CD8-positive, alpha-beta T cell (primary cell): ENCODE measurements at regions of chr2 and their contacts with region 1.

Region 1: DNA sequence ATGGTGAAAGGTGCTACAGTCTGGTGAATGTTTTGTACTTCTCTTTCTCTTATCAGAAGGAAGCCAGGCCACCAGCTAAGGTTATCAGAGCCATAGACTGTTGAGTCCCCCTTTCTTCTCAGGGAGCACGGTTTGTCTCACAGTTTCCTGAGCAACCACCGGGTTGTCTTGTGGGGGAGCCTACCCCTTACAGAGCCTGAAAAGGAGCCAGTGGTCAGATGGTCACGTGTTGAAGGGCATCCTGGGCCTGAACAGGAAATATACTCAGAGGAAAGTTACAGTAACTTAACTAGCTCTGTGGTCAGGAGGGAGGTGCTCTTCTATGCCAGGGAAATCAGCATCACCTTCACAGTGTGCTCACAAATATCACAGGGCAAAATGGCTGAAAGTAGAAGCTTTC is 11.6 kb downstream of the CD28 start:
- DNase-seq: peak in 7 of 9 experiments; percentile 42 to 83 (median 68)
- ATAC-seq: peak; percentile 42
- H3K4me3 ChIP-seq: peak overlapping the region in 1 of 2 experiments; percentile 10
- H3K4me3 Mint-ChIP-seq: peak overlapping the region; percentile 59
- H3K27ac ChIP-seq: peak overlapping the region; percentile 39 to 57
- H3K27ac Mint-ChIP-seq: peak overlapping the region; percentile 95
- H3K4me1 ChIP-seq: peaks cover 98% of the 10 kb centered on the region
- H3K4me1 Mint-ChIP-seq: peaks cover 98% of the 10 kb centered on the region
- H3K27me3 ChIP-seq: no peaks in the 10 kb centered on the region
- H3K27me3 Mint-ChIP-seq: no peaks in the 10 kb centered on the region
- CTCF ChIP-seq: no peak

Region 2: DNA sequence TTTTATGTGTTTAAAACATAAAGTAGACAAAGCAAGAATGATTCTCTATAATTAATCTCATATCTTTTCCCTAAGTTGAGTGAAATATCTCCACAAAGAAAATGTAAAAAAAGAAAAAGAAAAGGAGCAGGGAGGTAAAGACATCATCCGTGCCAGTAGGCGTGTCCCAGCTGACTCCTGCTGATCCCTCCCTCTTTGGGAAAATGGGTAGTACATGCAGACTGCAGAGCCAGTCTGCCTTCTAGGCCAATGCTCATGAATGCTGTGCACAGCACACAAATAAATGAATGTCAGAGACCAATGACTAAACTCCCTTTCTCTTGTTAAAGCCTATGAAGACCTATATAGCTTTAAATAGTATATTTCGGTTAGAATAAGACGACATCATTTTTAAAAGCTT is 247.7 kb before region 1 on chr2:
- CTCF ChIA-PET with region 1: no interaction called
- POLR2A ChIA-PET with region 1: no interaction called
- intact Hi-C with region 1: no loop called
- DNase-seq: no peak
- ATAC-seq: no peak
- H3K4me3 ChIP-seq: no peak overlapping the region
- H3K4me3 Mint-ChIP-seq: no peak overlapping the region
- H3K27ac ChIP-seq: no peak overlapping the region
- H3K27ac Mint-ChIP-seq: no peak overlapping the region
- H3K4me1 ChIP-seq: no peaks in the 10 kb centered on the region
- H3K4me1 Mint-ChIP-seq: no peaks in the 10 kb centered on the region
- H3K27me3 ChIP-seq: no peaks in the 10 kb centered on the region
- H3K27me3 Mint-ChIP-seq: no peaks in the 10 kb centered on the region
- CTCF ChIP-seq: no peak

Region 3: DNA sequence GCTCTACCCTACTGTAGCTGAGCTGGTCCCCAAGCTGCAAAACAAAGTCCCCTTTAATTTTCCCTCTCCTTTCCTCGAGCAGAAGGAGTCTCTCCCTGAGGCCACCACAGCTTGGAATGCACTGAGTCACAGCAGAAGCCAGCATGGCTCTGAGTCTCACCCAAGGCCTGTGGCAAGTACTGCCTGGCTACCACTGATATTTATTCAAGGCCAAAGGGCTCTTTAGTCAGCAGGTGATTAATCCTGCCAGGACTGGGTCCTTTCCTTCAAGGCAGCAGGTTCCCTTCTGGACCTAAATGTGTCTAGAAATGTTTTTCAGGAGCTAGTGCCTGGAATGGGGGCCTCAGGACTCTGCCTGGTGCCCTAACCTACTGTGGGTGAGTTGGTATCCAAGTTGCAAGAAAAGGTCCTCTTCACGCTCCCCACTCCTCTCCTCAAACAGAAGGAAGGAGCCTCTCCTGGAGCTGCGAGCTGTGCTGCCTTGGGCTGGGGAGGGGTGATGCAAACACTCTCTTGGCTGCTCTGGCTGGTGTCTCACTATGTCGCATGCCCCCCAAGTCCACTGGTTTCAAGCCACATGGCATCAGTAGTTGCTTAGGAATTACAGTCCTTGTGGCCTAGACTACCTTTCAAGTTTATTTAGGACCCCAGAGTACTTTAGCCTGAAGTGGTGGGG is 41.7 kb after region 1 on chr2:
- CTCF ChIA-PET with region 1: interaction called, 3 read pairs
- POLR2A ChIA-PET with region 1: interaction called, 9 read pairs
- intact Hi-C with region 1: loop called in 1 of 2 experiments (anchors 5 kb)
- DNase-seq: no peak
- ATAC-seq: no peak
- H3K4me3 ChIP-seq: no peak overlapping the region
- H3K4me3 Mint-ChIP-seq: no peak overlapping the region
- H3K27ac ChIP-seq: no peak overlapping the region
- H3K27ac Mint-ChIP-seq: no peak overlapping the region
- H3K4me1 ChIP-seq: peaks cover 22% of the 10 kb centered on the region
- H3K4me1 Mint-ChIP-seq: peaks cover 51% of the 10 kb centered on the region
- H3K27me3 ChIP-seq: no peaks in the 10 kb centered on the region
- H3K27me3 Mint-ChIP-seq: no peaks in the 10 kb centered on the region
- CTCF ChIP-seq: no peak

Region 4: DNA sequence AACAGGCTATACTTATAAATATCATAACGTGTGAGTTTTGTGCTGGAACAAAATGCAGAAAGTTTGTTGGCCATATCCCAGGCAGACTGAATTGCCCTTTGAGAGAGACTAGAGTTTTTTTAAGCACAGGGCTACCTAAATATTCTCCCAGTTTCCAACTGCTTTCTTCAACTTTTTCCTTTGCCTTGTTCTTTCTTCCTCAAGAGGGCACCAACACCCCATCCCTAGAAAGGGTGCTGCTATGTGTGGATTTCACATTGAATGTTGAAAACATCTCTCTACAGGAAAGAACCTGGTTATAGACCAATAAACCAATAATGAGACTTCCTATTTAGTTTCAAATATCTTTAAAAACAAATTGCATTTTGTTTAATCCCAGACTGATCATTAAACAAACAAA is 306.4 kb after region 1 on chr2:
- CTCF ChIA-PET with region 1: no interaction called
- POLR2A ChIA-PET with region 1: no interaction called
- intact Hi-C with region 1: no loop called
- DNase-seq: peak in 1 of 9 experiments; percentile 20
- ATAC-seq: no peak
- H3K4me3 ChIP-seq: no peak overlapping the region
- H3K4me3 Mint-ChIP-seq: no peak overlapping the region
- H3K27ac ChIP-seq: no peak overlapping the region
- H3K27ac Mint-ChIP-seq: no peak overlapping the region
- H3K4me1 ChIP-seq: no peaks in the 10 kb centered on the region
- H3K4me1 Mint-ChIP-seq: peaks cover 18% of the 10 kb centered on the region
- H3K27me3 ChIP-seq: no peaks in the 10 kb centered on the region
- H3K27me3 Mint-ChIP-seq: no peaks in the 10 kb centered on the region
- CTCF ChIP-seq: no peak